Endothelial cell of umbilical vein (primary cell): ENCODE measurements at regions of chr19 and their contacts with region 1.

Region 1: DNA sequence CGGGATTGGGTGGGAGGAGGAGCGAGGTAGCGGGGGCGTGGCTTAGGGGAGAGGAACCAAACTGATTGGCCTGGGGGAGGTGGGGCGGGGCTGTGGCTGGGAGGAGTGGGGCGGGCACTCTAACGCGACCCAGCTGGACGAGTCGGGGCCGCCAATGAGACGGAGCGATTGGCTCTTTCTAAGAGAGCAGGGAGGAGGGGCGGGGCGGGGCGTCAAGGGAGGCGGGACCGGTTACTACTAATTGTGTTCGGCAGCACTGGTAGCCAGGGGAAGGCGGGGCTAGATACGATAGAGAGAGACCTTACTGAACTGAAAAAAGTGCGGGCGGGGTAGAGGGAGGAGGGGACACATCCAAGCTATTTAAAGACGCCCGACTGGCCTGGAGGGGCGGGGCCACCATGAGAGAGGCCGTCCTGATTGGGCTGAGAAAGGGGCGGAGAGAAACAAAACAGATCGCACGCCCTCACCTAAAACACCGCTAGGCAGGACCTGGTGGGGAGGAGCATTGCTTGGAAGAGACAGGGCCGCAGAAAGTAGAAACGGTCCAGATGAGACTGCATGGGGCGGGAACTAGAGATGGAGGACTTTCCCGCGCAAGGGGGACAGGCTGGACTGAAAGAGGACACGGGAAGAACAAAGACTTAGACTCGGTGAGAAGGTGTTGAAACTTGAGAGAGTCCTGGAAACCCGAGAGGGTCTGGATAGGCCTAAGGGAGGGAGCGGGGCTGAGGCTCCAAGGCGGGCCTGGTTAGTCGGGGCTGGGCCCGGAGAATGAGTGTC is at the start of gene KCNC3:
- DNase-seq: peak; percentile 99
- H3K4me3 ChIP-seq: peak within 1 kb of the TSS; percentile 28 to 42 (median 31)
- H3K27ac ChIP-seq: no peak within 1 kb of the TSS
- H3K4me1 ChIP-seq: peaks cover 9% of the 10 kb centered on the region
- H3K27me3 ChIP-seq: peaks cover 32 to 35% of the 10 kb centered on the region in 2 experiments
- CTCF ChIP-seq: no peak
- POLR2A ChIP-seq: no peak
- total RNA-seq, gene KCNC3: 0.76 and 0.91 TPM in 2 replicates

Region 2: DNA sequence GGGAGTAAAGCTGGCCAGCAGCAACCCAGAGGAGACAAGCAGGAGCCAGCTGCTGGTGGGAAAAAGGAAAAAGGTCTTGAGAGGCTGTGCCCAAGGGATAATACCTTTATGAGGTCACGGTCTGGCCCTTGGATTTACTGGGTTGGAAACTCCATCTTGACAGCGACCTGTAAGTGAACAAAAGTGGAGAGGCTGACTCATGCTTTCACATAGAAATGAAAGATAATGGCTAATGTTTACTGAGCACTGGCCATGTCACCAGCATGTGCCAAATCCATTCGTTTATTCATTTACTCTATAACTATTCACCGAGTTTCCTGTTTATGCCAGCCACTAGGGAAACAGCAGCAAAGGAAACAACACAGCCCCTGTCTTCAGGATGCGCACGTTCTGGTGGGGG is 308.9 kb before region 1 on chr19:
- CTCF ChIA-PET with region 1: no interaction called
- POLR2A ChIA-PET with region 1: no interaction called
- dilution Hi-C with region 1: no loop called
- intact Hi-C with region 1: no loop called
- DNase-seq: peak; percentile 16
- H3K4me3 ChIP-seq: no peak overlapping the region
- H3K27ac ChIP-seq: no peak overlapping the region
- H3K4me1 ChIP-seq: peaks cover 7% of the 10 kb centered on the region
- H3K27me3 ChIP-seq: no peaks in the 10 kb centered on the region
- CTCF ChIP-seq: no peak
- POLR2A ChIP-seq: no peak

Region 3: DNA sequence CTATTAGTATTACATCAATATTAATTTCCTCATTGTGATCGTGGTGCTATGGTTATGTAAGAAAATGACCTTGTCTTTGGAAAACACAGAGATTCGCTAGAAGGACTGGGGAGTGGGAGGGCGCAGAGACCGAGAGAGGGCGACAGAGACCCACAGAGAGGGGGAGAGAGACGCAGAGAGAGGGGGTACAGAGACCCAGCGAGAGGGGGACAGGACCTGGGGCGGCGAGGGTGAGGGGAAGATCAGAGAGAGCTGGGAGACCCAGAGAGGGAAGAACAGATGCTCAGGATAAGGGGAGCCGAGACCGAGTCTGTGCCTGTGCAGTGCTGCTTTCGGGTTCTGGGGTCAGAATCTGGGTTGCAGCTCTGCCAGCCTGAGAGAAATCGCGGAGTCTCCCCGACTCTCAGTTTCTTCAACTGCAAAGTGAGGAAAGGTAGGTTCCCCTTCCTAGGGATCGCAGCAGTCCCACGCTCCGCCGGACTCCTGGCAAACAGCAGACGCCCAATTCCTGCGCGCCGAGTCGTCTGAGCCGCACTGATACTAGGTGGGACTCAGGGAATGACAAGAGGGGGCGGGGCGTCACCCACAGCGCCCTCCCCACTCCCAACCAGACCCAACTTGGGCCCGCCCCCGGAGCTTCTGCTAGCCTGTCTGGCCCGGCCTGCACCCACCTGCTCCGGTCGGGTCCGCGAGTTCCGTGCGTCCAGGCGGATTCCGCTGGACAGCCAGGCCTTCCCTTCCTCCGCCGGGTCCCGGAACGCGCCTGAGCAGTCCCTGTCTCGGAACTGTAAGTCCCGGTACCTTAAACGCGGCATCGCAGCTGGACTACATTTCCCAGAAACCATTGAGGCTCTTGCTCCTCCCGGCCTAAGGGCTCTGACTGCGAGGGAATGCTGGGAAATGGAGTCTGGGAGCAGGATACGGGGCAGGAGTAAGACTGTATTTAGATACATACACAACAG is 181.6 kb before region 1 on chr19:
- CTCF ChIA-PET with region 1: interaction called, 28 read pairs
- POLR2A ChIA-PET with region 1: no interaction called
- dilution Hi-C with region 1: no loop called
- intact Hi-C with region 1: no loop called
- DNase-seq: peak; percentile 92
- H3K4me3 ChIP-seq: peak overlapping the region; percentile 3 to 56 (median 50)
- H3K27ac ChIP-seq: no peak overlapping the region
- H3K4me1 ChIP-seq: no peaks in the 10 kb centered on the region
- H3K27me3 ChIP-seq: no peaks in the 10 kb centered on the region
- CTCF ChIP-seq: peak; percentile 42 to 52
- POLR2A ChIP-seq: no peak

Region 4: DNA sequence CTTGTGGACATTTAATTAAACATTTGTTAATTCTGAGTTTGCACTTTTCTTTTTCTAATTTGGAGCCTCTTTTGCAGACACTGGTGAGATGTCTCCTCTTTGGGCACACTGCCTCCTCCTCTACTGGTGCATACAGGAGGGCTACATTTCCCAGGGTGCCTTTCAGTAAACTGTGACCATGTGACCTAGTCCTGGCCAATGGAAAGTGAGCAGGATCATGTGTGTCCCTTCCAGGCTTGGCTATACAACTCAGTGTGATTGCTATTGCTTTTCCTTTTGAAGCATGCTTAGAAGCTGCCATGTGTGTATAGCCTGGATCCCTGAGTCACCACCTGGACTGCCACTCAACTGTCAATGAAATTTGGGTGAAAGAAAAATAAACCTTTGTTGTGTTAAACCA is 170.8 kb before region 1 on chr19:
- CTCF ChIA-PET with region 1: no interaction called
- POLR2A ChIA-PET with region 1: no interaction called
- dilution Hi-C with region 1: no loop called
- intact Hi-C with region 1: no loop called
- DNase-seq: no peak
- H3K4me3 ChIP-seq: no peak overlapping the region
- H3K27ac ChIP-seq: no peak overlapping the region
- H3K4me1 ChIP-seq: no peaks in the 10 kb centered on the region
- H3K27me3 ChIP-seq: no peaks in the 10 kb centered on the region
- CTCF ChIP-seq: no peak
- POLR2A ChIP-seq: no peak

Region 5: GRCh38 chr19:50258918-50259372 is 70.4 kb before region 1 on chr19:
- CTCF ChIA-PET with region 1: interaction called, 43 read pairs
- POLR2A ChIA-PET with region 1: no interaction called
- dilution Hi-C with region 1: no loop called
- intact Hi-C with region 1: no loop called
- DNase-seq: no peak
- H3K4me3 ChIP-seq: no peak overlapping the region
- H3K27ac ChIP-seq: no peak overlapping the region
- H3K4me1 ChIP-seq: no peaks in the 10 kb centered on the region
- H3K27me3 ChIP-seq: no peaks in the 10 kb centered on the region
- CTCF ChIP-seq: peak; percentile 54 to 61
- POLR2A ChIP-seq: no peak

Region 6: DNA sequence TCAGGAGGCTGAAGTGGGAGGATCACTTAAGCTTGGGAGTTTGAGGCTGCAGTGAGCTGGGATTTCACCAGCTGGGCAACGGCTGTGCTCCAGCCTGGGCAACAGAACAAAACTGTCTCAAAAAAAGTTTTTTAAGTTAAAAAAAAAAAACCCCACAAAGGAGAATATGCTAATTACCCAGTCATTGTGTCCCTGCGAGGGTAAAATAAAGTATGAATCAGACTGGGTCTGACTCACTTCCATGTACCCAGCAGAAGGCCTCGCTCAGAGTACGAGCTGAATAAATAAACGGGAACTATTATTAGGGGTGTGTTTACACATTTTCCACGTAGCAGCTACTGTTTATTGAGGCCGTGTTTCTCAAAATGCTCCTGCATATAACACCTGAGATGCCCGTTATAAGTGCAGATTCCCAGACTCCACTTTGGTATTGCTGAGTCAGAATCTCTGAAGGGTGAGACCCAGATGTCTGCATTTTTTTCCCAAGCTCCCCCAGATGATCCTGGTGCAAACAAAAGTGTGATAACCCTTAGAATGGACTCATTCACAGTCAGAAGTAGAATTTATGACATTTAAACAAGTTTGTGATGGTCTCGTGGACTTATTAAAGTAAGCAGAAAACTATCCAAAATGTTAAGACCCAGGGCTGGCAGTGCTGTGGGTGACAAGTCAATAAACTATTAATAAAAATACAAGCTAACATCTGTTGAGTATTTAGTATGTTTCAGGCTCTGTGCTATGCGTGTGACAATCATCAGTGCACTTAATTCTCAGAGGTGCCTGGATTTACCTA is 28.3 kb before region 1 on chr19:
- CTCF ChIA-PET with region 1: interaction called, 48 read pairs
- POLR2A ChIA-PET with region 1: no interaction called
- dilution Hi-C with region 1: no loop called
- intact Hi-C with region 1: loop called (anchors 1 kb)
- DNase-seq: peak; percentile 91
- H3K4me3 ChIP-seq: no peak overlapping the region
- H3K27ac ChIP-seq: peak overlapping the region; percentile 66
- H3K4me1 ChIP-seq: peaks cover 16% of the 10 kb centered on the region
- H3K27me3 ChIP-seq: peaks cover 0 to 3% of the 10 kb centered on the region in 2 experiments
- CTCF ChIP-seq: no peak
- POLR2A ChIP-seq: no peak

Region 7: GRCh38 chr19:50657712-50658440 is 328.5 kb after region 1 on chr19:
- CTCF ChIA-PET with region 1: no interaction called
- POLR2A ChIA-PET with region 1: no interaction called
- dilution Hi-C with region 1: no loop called
- intact Hi-C with region 1: loop called (anchors 5 kb)
- DNase-seq: peak; percentile 98
- H3K4me3 ChIP-seq: peak overlapping the region in 2 of 3 experiments; percentile 2 to 26
- H3K27ac ChIP-seq: peak overlapping the region; percentile 71
- H3K4me1 ChIP-seq: peaks cover 11% of the 10 kb centered on the region
- H3K27me3 ChIP-seq: peaks cover 0 to 2% of the 10 kb centered on the region in 2 experiments
- CTCF ChIP-seq: no peak
- POLR2A ChIP-seq: no peak